ENCODE measurements at regions of chr1 and their contacts with region 1.

Region 1: GRCh38 chr1:185156854-185157598 is at the starts of genes SWT1 and TRMT1L:
- DNase-seq: peak; percentile 99
- ATAC-seq: peak; percentile 96
- H3K4me3 ChIP-seq: peak within 1 kb of the TSS; percentile 70
- H3K27ac ChIP-seq: peak within 1 kb of the TSS; percentile 90
- H3K4me1 ChIP-seq: peaks cover 2% of the 10 kb centered on the region; the same call in 1 of the 2 replicates
- H3K27me3 ChIP-seq: no peaks in the 10 kb centered on the region
- CTCF ChIP-seq: no peak
- POLR2A ChIP-seq: peak; percentile 93
- RAD21 ChIP-seq: no peak
- total RNA-seq, gene SWT1: 2.7 and 4.2 TPM in 2 replicates
- total RNA-seq, gene TRMT1L: 21.9 and 25.3 TPM in 2 replicates

Region 2: GRCh38 chr1:184805667-184806295 is 351.2 kb before region 1 on chr1:
- CTCF ChIA-PET with region 1: no interaction called
- POLR2A ChIA-PET with region 1: no interaction called
- dilution Hi-C with region 1: no loop called
- in situ Hi-C with region 1: loop called (anchors 10 kb)
- intact Hi-C with region 1: loop called (anchors 5 kb)
- DNase-seq: peak; percentile 83
- ATAC-seq: peak; percentile 89
- H3K4me3 ChIP-seq: no peak overlapping the region
- H3K27ac ChIP-seq: no peak overlapping the region
- H3K4me1 ChIP-seq: peaks cover 7% of the 10 kb centered on the region
- H3K27me3 ChIP-seq: no peaks in the 10 kb centered on the region
- CTCF ChIP-seq: peak; percentile 96
- POLR2A ChIP-seq: 0 out of 2 replicates have a peak, but pooled peaks have one; percentile 50
- RAD21 ChIP-seq: peak; percentile 99

Region 3: GRCh38 chr1:185044981-185045813 is 111.8 kb before region 1 on chr1 and contains the start of gene RNF2:
- CTCF ChIA-PET with region 1: no interaction called
- POLR2A ChIA-PET with region 1: no interaction called
- dilution Hi-C with region 1: no loop called
- in situ Hi-C with region 1: no loop called
- intact Hi-C with region 1: loop called (anchors 1 kb)
- DNase-seq: peak; percentile 71
- ATAC-seq: peak; percentile 96
- H3K4me3 ChIP-seq: peak within 1 kb of the TSS; percentile 96
- H3K27ac ChIP-seq: peak within 1 kb of the TSS; percentile 72
- H3K4me1 ChIP-seq: peaks cover 3% of the 10 kb centered on the region
- H3K27me3 ChIP-seq: no peaks in the 10 kb centered on the region
- CTCF ChIP-seq: no peak
- POLR2A ChIP-seq: no peak
- RAD21 ChIP-seq: no peak
- total RNA-seq, gene RNF2: 39.7 and 48.8 TPM in 2 replicates

Region 4: GRCh38 chr1:185170291-185170848 is 13.3 kb after region 1 on chr1:
- CTCF ChIA-PET with region 1: interaction called, 10 read pairs
- POLR2A ChIA-PET with region 1: interaction called, 9 read pairs
- dilution Hi-C with region 1: no loop called
- in situ Hi-C with region 1: no loop called
- intact Hi-C with region 1: no loop called
- DNase-seq: peak; percentile 67
- ATAC-seq: peak; percentile 90
- H3K4me3 ChIP-seq: no peak overlapping the region
- H3K27ac ChIP-seq: no peak overlapping the region
- H3K4me1 ChIP-seq: no peaks in the 10 kb centered on the region; the same call in 1 of the 2 replicates
- H3K27me3 ChIP-seq: no peaks in the 10 kb centered on the region
- CTCF ChIP-seq: peak; percentile 56
- POLR2A ChIP-seq: no peak
- RAD21 ChIP-seq: peak; percentile 68